Heart left ventricle (tissue), 16 donors: ENCODE measurements at regions of chr3 and their contacts with region 1.

Region 1: GRCh38 chr3:128369864-128370642 is 96.6 kb downstream of the DNAJB8 start:
- DNase-seq: peak in 1 of 5 donors; percentile 49
- ATAC-seq: peak in 3 of 4 donors; percentile 5 to 18 (median 8)
- H3K4me3 ChIP-seq: no peak overlapping the region
- H3K27ac ChIP-seq: peak overlapping the region; percentile 26 to 84 (median 62)
- H3K4me1 ChIP-seq: peaks cover 3 to 65% (median 39%) of the 10 kb centered on the region in 12 donors
- H3K27me3 ChIP-seq: no peaks in the 10 kb centered on the region
- CTCF ChIP-seq: peak in 1 of 12 donors; percentile 3
- POLR2A ChIP-seq: no peak

Region 2: DNA sequence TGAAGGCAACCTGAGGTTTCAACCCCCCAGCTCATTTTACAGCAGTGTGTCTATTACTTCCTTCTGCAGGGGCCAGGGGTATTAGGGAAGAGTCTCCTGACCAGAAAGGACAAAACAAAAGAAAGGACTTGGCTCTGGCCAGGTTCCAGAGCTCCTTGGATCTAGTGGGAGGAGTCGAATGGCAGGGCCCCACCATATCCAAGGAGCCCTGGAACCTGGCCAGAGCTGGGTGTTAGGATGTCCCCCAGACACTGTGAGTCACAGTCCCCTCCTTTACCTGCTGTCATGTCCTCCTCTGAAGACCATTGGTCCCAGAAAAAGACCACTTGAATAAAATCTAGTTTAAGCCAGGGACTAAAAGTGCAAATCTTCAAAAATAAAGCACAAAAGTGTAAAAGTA is 103.6 kb before region 1 on chr3:
- intact Hi-C with region 1: no loop called
- DNase-seq: no peak
- ATAC-seq: peak in 2 of 4 donors; percentile 28 to 38
- H3K4me3 ChIP-seq: no peak overlapping the region
- H3K27ac ChIP-seq: no peak overlapping the region
- H3K4me1 ChIP-seq: peaks cover 0 to 10% (median 0%) of the 10 kb centered on the region in 12 donors
- H3K27me3 ChIP-seq: no peaks in the 10 kb centered on the region
- CTCF ChIP-seq: no peak
- POLR2A ChIP-seq: no peak

Region 3: GRCh38 chr3:128297401-128298138 is 72.5 kb before region 1 on chr3:
- intact Hi-C with region 1: loop called in 1 of 10 experiments (anchors 5 kb)
- DNase-seq: peak in 2 of 5 donors; percentile 31 to 66
- ATAC-seq: peak in 3 of 4 donors; percentile 18 to 53 (median 32)
- H3K4me3 ChIP-seq: no peak overlapping the region
- H3K27ac ChIP-seq: peak overlapping the region; percentile 2 to 84 (median 54)
- H3K4me1 ChIP-seq: peaks cover 0 to 56% (median 23%) of the 10 kb centered on the region in 12 donors
- H3K27me3 ChIP-seq: no peaks in the 10 kb centered on the region
- CTCF ChIP-seq: no peak
- POLR2A ChIP-seq: no peak

Region 4: GRCh38 chr3:128307029-128307633 is 62.9 kb before region 1 on chr3:
- intact Hi-C with region 1: loop called in 3 of 10 experiments (anchors 5 kb)
- DNase-seq: peak in 1 of 5 donors; percentile 9
- ATAC-seq: peak in 1 of 4 donors; percentile 18
- H3K4me3 ChIP-seq: no peak overlapping the region
- H3K27ac ChIP-seq: no peak overlapping the region
- H3K4me1 ChIP-seq: peaks cover 0 to 40% (median 8%) of the 10 kb centered on the region in 12 donors
- H3K27me3 ChIP-seq: no peaks in the 10 kb centered on the region
- CTCF ChIP-seq: peak in 2 of 12 donors; percentile 20 to 28
- POLR2A ChIP-seq: no peak

Region 5: GRCh38 chr3:128383316-128384235 is 13.5 kb after region 1 on chr3:
- intact Hi-C with region 1: loop called in 1 of 10 experiments (anchors 2 kb)
- DNase-seq: peak; percentile 64 to 85 (median 82)
- ATAC-seq: peak; percentile 18 to 68 (median 56)
- H3K4me3 ChIP-seq: no peak overlapping the region
- H3K27ac ChIP-seq: peak overlapping the region in 11 of 12 donors; percentile 33 to 86 (median 67)
- H3K4me1 ChIP-seq: peaks cover 0 to 62% (median 41%) of the 10 kb centered on the region in 12 donors
- H3K27me3 ChIP-seq: no peaks in the 10 kb centered on the region
- CTCF ChIP-seq: no peak
- POLR2A ChIP-seq: no peak

Region 6: DNA sequence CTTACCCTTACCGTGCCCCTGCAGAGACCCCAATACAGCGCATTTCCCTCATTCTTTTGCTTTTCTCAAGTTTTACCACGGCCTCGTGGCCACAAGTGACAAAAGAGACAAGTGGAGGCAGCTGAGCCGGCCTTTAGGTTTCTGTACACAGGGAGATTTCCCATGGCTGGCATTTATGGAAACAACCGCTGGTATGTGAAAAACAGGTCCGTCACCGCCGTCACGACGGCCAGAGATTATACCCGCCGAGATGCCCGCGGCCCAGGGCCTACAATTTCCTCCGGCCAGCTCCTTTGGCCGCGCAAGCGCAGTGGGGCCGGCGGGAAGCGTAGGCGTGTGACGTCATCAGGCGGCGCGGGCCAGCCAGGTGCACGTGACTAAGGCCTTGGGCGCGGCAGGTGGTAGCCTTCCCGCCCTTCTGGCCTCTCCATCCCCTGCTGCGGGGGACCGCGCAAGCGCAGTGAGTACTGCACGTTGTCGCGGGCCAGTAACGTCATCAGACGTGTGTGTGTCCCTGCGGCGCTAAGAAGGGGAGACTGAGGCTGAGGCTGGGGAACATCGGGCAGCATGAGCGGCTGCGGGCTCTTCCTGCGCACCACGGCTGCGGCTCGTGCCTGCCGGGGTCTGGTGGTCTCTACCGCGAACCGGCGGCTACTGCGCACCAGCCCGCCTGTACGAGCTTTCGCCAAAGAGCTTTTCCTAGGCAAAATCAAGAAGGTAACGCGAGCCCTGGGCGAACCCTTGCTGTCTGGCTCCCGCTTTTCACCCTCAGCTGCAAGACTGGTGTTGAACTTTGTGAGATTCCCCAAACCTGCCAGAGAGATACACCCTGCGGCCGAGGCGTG is 509.3 kb after region 1 on chr3 and contains the start of gene ACAD9:
- intact Hi-C with region 1: no loop called
- DNase-seq: peak; percentile 97 to 99 (median 98)
- ATAC-seq: peak; percentile 94 to 98 (median 97)
- H3K4me3 ChIP-seq: peak within 1 kb of the TSS; percentile 40 to 92 (median 76)
- H3K27ac ChIP-seq: peak within 1 kb of the TSS; percentile 83 to 98 (median 95)
- H3K4me1 ChIP-seq: peaks cover 0 to 62% (median 30%) of the 10 kb centered on the region in 12 donors
- H3K27me3 ChIP-seq: no peaks in the 10 kb centered on the region
- CTCF ChIP-seq: no peak
- POLR2A ChIP-seq: peak in 1 of 2 donors; percentile 90
- total RNA-seq, gene ACAD9: 29.9 to 44.9 (median 36.7) TPM